GM10248 (cell line): ENCODE measurements at regions of chr5 and their contacts with region 1.

Region 1: GRCh38 chr5:91383027-91383955 is at the start of gene ARRDC3:
- DNase-seq: peak; percentile 84
- CTCF ChIP-seq: no peak

Region 2: GRCh38 chr5:91101600-91102379 is 281.5 kb before region 1 on chr5:
- CTCF ChIA-PET with region 1: interaction called, 56 read pairs
- POLR2A ChIA-PET with region 1: no interaction called
- DNase-seq: peak; percentile 51
- CTCF ChIP-seq: peak; percentile 62

Region 3: DNA sequence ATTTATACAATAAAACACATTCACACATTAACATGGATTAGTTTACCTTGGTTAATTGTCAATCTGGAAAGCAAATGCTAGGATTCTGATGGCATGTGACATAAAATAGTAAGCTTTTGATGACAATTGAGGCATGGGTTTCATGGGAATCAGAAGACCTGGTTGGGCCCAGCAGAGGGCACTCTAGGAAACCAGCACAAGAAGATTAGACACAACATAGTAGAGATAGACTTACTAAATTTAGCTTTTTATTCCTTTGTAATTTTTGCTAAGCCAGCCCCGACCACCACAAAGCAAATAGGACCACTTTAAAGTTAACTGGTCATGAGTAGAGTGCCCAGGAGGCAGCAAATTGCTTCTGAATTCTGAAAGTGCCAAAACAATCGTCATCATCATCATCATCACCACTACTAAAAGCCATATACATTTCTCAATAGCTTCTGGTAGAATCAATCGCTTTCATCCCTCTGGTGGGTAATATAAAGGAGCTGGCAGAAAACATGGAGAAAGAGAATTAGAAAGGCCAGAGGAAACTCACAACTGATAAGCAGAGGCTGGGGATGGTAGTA is 163.4 kb before region 1 on chr5:
- CTCF ChIA-PET with region 1: interaction called, 55 read pairs
- POLR2A ChIA-PET with region 1: no interaction called
- DNase-seq: peak; percentile 32
- CTCF ChIP-seq: peak; percentile 25

Region 4: DNA sequence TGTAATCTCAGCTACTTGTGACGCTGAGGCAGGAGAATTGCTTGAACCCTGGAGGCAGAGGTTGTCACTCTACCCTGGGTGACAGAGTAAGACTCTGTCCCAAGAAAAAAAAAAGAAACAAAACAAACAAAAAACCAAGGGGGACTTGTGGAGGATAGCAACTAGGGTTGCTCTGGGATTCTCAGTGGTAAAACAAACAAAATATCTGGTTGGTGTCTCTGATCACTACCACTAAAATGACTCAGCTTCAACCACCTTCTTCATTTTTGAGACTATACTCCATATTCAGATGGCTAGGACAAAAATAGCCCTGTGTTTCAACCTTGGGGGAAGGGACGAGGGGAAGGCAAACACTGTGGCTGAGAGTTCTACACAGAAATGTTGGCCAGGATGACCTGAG is 110.4 kb before region 1 on chr5:
- CTCF ChIA-PET with region 1: interaction called, 20 read pairs
- POLR2A ChIA-PET with region 1: interaction called, 6 read pairs
- DNase-seq: peak; percentile 58
- CTCF ChIP-seq: no peak

Region 5: GRCh38 chr5:91366571-91366970 is 16.7 kb before region 1 on chr5:
- CTCF ChIA-PET with region 1: interaction called, 17 read pairs
- POLR2A ChIA-PET with region 1: interaction called, 10 read pairs
- DNase-seq: no peak
- CTCF ChIP-seq: no peak

Region 6: GRCh38 chr5:91408710-91409109 is 25.4 kb after region 1 on chr5:
- CTCF ChIA-PET with region 1: interaction called, 11 read pairs
- POLR2A ChIA-PET with region 1: no interaction called
- DNase-seq: no peak
- CTCF ChIP-seq: no peak

Region 7: DNA sequence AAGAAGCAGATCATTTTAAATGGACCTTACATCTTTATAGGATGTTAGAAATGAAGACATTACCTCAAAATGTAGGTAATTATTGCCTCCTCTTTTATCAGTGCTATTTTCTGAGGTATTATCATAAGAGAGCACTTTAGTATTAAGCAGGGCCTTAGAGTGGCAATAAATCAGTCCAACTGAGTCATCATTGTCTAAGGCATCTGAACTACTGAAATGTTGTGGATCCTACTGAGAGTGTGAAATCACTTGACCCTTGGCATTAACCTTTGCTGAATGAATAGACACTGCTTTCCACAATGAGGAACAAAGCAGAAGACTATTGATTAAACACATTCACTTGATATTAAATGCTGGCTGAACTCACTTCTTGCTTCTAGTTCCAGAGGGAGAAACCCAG is 224.4 kb after region 1 on chr5:
- CTCF ChIA-PET with region 1: no interaction called
- POLR2A ChIA-PET with region 1: no interaction called
- DNase-seq: no peak
- CTCF ChIP-seq: no peak